ENCODE measurements at regions of chr11 and their contacts with region 1.

Region 1: GRCh38 chr11:125941619-125942611 is 3.9 kb upstream of the VSIG10L2 start:
- DNase-seq: peak; percentile 55 to 63
- ATAC-seq: peak; percentile 68 to 89 (median 78)
- H3K4me3 ChIP-seq: no peak overlapping the region
- H3K27ac ChIP-seq: peak overlapping the region in 8 of 10 donors; percentile 5 to 72 (median 54)
- H3K4me1 ChIP-seq: peaks cover 7 to 26% (median 17%) of the 10 kb centered on the region in 9 donors
- H3K27me3 ChIP-seq: peaks cover 0 to 4% (median 0%) of the 10 kb centered on the region in 7 donors
- CTCF ChIP-seq: peak; percentile 30 to 74 (median 70)

Region 2: GRCh38 chr11:125514336-125515101 is 427.4 kb before region 1 on chr11:
- intact Hi-C with region 1: no loop called
- DNase-seq: no peak
- ATAC-seq: peak in 4 of 8 donors; percentile 38 to 64 (median 48)
- H3K4me3 ChIP-seq: no peak overlapping the region
- H3K27ac ChIP-seq: no peak overlapping the region
- H3K4me1 ChIP-seq: peaks cover 0 to 30% (median 0%) of the 10 kb centered on the region in 9 donors
- H3K27me3 ChIP-seq: peaks cover 0 to 3% (median 0%) of the 10 kb centered on the region in 7 donors
- CTCF ChIP-seq: no peak

Region 3: GRCh38 chr11:125990244-125990643 is 48.3 kb after region 1 on chr11:
- intact Hi-C with region 1: loop called in 1 of 10 experiments (anchors 10 kb)
- DNase-seq: peak in 1 of 2 donors; percentile 48
- ATAC-seq: peak in 6 of 8 donors; percentile 33 to 75 (median 62)
- H3K4me3 ChIP-seq: no peak overlapping the region
- H3K27ac ChIP-seq: peak overlapping the region in 2 of 10 donors; percentile 41 to 46
- H3K4me1 ChIP-seq: peaks cover 0 to 13% (median 4%) of the 10 kb centered on the region in 9 donors
- H3K27me3 ChIP-seq: no peaks in the 10 kb centered on the region
- CTCF ChIP-seq: no peak

Region 4: GRCh38 chr11:126132319-126132718 is 190.4 kb after region 1 on chr11:
- intact Hi-C with region 1: no loop called
- DNase-seq: no peak
- ATAC-seq: peak in 5 of 8 donors; percentile 37 to 84 (median 76)
- H3K4me3 ChIP-seq: no peak overlapping the region
- H3K27ac ChIP-seq: peak overlapping the region in 1 of 10 donors; percentile 25
- H3K4me1 ChIP-seq: peaks cover 0 to 53% (median 23%) of the 10 kb centered on the region in 9 donors
- H3K27me3 ChIP-seq: no peaks in the 10 kb centered on the region
- CTCF ChIP-seq: peak in 3 of 9 donors; percentile 14 to 22 (median 17)